Panc1 (cell line): ENCODE measurements at regions of chr4 and their contacts with region 1.

Region 1: DNA sequence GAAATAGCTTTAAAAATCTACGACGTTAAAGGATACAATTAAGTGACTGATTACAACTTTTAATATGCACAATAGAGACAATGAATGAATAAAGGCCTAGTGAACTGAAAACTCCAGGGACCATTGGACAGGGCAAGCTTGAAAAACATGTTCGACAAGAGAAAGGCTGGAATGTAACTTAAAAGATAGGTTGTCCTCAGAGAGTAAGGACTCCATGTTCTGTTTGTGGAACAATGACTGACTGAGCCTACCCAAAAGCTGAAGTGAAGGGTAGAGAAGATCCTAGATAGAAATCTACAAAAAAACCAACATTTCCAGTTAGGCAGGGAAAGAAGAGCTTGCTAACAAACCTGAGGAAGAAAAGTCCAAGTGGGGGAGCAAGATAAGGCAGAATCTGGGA is 173.4 kb downstream of the NR3C2 start:
- DNase-seq: no peak
- ATAC-seq: no peak
- H3K4me3 ChIP-seq: no peak overlapping the region
- H3K27ac ChIP-seq: no peak overlapping the region
- H3K4me1 ChIP-seq: no peaks in the 10 kb centered on the region
- H3K27me3 ChIP-seq: no peaks in the 10 kb centered on the region
- CTCF ChIP-seq: no peak

Region 2: GRCh38 chr4:149699642-149700041 is 1430.8 kb after region 1 on chr4:
- CTCF ChIA-PET with region 1: no interaction called
- POLR2A ChIA-PET with region 1: interaction called, 18 read pairs
- in situ Hi-C with region 1: no loop called
- intact Hi-C with region 1: no loop called
- DNase-seq: no peak
- ATAC-seq: no peak
- H3K4me3 ChIP-seq: no peak overlapping the region
- H3K27ac ChIP-seq: no peak overlapping the region
- H3K4me1 ChIP-seq: no peaks in the 10 kb centered on the region
- H3K27me3 ChIP-seq: no peaks in the 10 kb centered on the region
- CTCF ChIP-seq: no peak